OCI-LY7 (cell line): ENCODE measurements at regions of chr1 and their contacts with region 1.

Region 1: DNA sequence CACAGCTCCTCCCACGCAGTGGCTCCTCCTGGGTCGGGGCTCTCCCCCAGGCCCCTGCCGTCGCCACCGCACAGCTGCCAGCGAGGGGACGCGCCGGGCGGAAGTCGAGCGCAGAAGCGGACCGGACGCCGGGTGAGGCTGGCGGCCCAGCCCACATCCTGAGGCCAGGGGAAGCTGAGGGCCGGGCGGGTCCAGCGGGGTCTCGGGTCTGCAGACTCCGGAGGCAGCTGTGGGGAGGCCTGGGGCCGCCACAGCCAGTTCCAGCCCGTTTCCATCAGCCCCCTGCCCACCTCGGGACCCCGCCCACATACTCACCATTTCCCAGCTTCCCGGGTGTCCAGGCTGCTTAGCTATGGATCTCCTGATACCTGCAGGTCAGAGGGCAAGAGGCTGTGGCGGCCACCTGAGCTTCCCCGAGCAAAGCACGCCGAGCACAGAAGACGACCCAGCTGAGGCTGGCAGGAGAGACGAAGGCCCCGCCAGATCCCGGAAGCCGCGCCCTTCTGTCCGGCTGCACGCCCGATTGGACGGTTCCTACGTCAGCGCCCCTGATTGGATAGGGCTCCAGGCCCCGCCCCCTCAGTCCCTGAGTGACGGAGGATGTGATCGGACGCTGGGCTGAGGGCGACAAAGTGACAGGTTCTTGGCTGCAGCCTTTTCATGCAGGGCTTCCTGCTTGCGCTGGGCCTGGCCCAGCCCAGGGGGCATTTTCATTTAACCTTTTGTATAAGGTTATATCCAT is 38.7 kb upstream of the ZNF124 start:
- DNase-seq: peak; percentile 98
- H3K4me3 ChIP-seq: peak overlapping the region; percentile 81
- H3K27ac ChIP-seq: peak overlapping the region; percentile 60
- H3K4me1 ChIP-seq: peaks cover 36% of the 10 kb centered on the region
- CTCF ChIP-seq: no peak

Region 2: GRCh38 chr1:246931549-246932365 is 278.8 kb before region 1 on chr1 and contains the start of gene AHCTF1:
- CTCF ChIA-PET with region 1: no interaction called
- POLR2A ChIA-PET with region 1: no interaction called
- intact Hi-C with region 1: loop called (anchors 5 kb)
- DNase-seq: peak; percentile 97
- H3K4me3 ChIP-seq: peak within 1 kb of the TSS; percentile 95
- H3K27ac ChIP-seq: peak within 1 kb of the TSS; percentile 88
- H3K4me1 ChIP-seq: peaks cover 10% of the 10 kb centered on the region
- CTCF ChIP-seq: no peak
- total RNA-seq, gene AHCTF1: 36.4 and 38.5 TPM in 2 replicates

Region 3: DNA sequence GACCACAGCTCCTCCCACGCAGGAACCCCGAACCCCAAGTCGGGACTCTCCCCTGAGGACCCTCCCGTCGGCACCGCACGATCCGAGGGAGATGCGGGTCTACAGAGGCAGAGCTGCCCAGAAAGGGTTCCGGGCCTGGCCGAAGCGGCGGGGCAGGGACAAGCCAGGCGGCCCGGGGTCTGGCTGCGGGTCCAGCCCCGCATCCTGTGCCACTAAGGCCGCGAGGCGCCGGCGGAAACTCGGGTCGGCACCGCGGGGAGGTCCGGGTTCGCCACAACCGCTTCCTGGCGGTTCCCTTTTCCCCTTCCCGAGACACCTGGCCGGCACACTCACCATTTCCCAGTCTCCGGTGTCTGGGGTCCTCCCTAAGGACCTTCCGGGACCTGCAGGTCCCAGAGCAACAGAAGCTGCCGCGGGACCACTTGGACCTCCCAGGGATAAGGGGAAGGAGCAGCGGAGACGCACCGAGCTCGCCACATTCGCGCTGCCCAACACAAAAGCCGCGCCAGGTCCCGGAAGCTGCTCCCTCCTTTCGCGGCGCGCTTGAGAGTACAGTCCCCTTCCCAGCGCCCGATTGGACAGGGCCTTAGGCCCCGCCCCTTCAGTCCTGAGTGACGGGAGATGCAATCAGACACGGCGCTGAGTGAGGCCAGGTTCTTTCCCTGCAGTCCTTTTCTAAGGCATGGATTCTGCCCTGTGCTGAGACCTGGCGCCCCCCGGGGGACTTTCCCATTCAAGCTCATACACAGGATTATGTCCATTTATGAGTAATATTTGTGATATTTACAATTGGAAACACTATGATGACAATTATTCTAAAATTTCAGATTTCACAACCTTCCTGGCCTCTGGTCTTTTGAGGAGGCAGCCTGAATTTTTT is 132.0 kb before region 1 on chr1 and contains the start of gene ZNF670:
- CTCF ChIA-PET with region 1: no interaction called
- POLR2A ChIA-PET with region 1: no interaction called
- intact Hi-C with region 1: loop called (anchors 5 kb)
- DNase-seq: peak; percentile 97
- H3K4me3 ChIP-seq: peak within 1 kb of the TSS; percentile 85
- H3K27ac ChIP-seq: peak within 1 kb of the TSS; percentile 46
- H3K4me1 ChIP-seq: peaks cover 18% of the 10 kb centered on the region
- CTCF ChIP-seq: peak; percentile 65
- total RNA-seq, gene ZNF670: 5.5 and 5.8 TPM in 2 replicates

Region 4: GRCh38 chr1:247103859-247104591 is 106.5 kb before region 1 on chr1 and contains the start of gene ZNF669:
- CTCF ChIA-PET with region 1: no interaction called
- POLR2A ChIA-PET with region 1: no interaction called
- intact Hi-C with region 1: loop called (anchors 1 kb)
- DNase-seq: peak; percentile 98
- H3K4me3 ChIP-seq: peak within 1 kb of the TSS; percentile 99
- H3K27ac ChIP-seq: peak within 1 kb of the TSS; percentile 74
- H3K4me1 ChIP-seq: peaks cover 14% of the 10 kb centered on the region
- CTCF ChIP-seq: no peak
- total RNA-seq, gene ZNF669: 16.9 and 17.4 TPM in 2 replicates

Region 5: GRCh38 chr1:247228133-247228532 is 17.6 kb after region 1 on chr1:
- CTCF ChIA-PET with region 1: no interaction called
- POLR2A ChIA-PET with region 1: no interaction called
- intact Hi-C with region 1: no loop called
- DNase-seq: no peak
- H3K4me3 ChIP-seq: no peak overlapping the region
- H3K27ac ChIP-seq: no peak overlapping the region
- H3K4me1 ChIP-seq: no peaks in the 10 kb centered on the region
- CTCF ChIP-seq: 0 out of 2 replicates have a peak, but pooled peaks have one; percentile 15

Region 6: GRCh38 chr1:247241687-247242086 is 31.1 kb after region 1 on chr1:
- CTCF ChIA-PET with region 1: no interaction called
- POLR2A ChIA-PET with region 1: no interaction called
- intact Hi-C with region 1: no loop called
- DNase-seq: no peak
- H3K4me3 ChIP-seq: no peak overlapping the region
- H3K27ac ChIP-seq: no peak overlapping the region
- H3K4me1 ChIP-seq: no peaks in the 10 kb centered on the region
- CTCF ChIP-seq: no peak

Region 7: DNA sequence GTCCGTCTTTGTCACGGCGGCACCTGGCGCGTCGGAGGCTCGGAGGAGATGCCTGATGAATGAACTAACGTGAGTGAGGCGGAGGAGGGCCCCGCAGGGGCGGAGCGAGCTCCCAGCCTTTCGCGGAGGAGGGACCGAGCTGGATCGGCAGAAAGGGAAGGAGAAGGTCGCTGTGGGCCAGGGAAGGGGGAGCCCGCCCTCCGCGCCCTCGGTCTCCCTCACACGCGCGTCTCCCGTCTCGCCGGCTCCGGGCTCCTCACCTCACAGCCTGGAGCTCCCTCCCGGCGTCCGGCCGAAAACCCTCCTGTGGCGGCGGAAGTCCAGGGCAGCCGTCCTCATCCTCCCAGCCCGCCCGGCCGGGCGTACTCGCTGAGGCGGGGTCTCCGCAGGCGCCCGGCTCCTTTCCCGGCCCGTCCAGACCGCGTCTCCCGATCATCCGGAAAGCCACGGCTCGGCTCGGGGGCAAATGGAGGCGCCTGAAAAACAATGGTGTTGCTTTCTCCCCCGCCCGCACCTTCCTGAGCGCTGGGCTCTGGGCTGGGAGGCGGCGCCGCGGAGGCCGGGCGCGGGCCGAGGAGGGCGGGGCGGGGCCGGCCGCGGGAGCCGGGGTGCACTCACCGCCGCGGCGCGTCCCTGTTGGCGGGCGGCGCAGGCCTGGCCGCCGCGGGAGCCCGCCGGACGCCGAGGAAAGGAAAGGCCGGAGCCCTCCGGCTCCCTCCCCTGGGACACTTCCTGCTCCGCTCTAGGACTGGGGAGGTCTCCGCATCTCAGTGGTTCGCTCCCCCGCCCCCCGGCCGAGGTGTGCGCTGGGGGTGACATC is 120.8 kb after region 1 on chr1 and contains the start of gene ZNF496:
- CTCF ChIA-PET with region 1: no interaction called
- POLR2A ChIA-PET with region 1: no interaction called
- intact Hi-C with region 1: loop called (anchors 5 kb)
- DNase-seq: peak; percentile 88
- H3K4me3 ChIP-seq: peak within 1 kb of the TSS; percentile 99
- H3K27ac ChIP-seq: peak within 1 kb of the TSS; percentile 42
- H3K4me1 ChIP-seq: peaks cover 22% of the 10 kb centered on the region
- CTCF ChIP-seq: no peak
- total RNA-seq, gene ZNF496: 29.2 and 36.4 TPM in 2 replicates

Region 8: DNA sequence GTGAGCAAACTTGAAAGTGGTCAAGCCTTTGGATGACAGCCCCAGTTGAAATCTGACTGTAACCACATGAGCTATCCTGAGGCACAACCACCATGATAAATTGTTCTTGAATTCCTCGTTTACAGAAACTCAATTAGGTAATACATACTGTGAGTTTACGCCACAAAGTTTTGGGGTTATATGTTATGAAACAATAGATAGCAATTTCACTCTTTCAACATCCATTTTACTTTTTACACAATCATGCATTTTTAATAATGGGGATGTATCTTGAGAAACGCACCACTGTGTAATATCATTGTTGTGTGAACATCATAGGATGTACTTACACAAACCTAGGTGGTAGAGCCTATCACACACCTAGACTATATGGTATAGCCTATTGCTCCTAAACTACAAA is 290.3 kb after region 1 on chr1:
- CTCF ChIA-PET with region 1: no interaction called
- POLR2A ChIA-PET with region 1: no interaction called
- intact Hi-C with region 1: no loop called
- DNase-seq: no peak
- H3K4me3 ChIP-seq: no peak overlapping the region
- H3K27ac ChIP-seq: no peak overlapping the region
- H3K4me1 ChIP-seq: no peaks in the 10 kb centered on the region
- CTCF ChIP-seq: no peak